Endothelial cell of umbilical vein (primary cell): ENCODE measurements at regions of chr1 and their contacts with region 1.

Region 1: DNA sequence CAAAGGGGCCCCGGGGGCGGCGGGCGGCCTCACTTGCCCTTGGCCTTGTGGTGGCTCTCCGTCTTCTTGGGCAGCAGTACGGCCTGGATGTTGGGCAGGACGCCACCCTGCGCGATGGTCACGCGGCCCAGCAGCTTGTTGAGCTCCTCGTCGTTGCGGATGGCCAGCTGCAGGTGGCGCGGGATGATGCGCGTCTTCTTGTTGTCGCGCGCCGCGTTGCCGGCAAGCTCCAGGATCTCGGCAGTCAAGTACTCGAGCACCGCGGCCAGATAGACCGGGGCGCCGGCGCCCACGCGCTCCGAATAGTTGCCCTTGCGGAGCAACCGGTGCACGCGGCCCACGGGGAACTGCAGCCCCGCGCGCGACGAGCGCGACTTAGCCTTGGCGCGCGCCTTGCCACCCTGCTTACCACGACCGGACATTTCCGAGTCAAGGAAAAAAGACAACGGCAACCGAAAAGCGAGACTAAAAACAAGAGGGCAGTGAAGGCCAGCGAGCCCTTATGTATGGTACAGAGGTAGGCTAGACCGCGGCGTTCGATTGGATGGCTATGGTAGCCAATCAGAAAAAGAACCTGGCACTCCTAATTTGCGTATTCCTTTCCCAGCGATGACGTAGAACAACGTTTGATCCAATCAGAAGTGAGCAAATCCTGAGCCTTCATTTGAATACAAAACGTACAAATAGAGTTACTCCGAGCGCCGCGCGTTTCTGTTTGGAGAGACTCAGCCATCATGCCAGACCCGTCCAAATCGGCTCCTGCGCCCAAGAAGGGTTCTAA is 29.6 kb upstream of the RNF187 start:
- DNase-seq: peak; percentile 99
- H3K4me3 ChIP-seq: peak overlapping the region; percentile 36 to 71 (median 46)
- H3K27ac ChIP-seq: peak overlapping the region; percentile 36
- H3K4me1 ChIP-seq: peaks cover 18% of the 10 kb centered on the region
- H3K27me3 ChIP-seq: peaks cover 7 to 13% of the 10 kb centered on the region in 2 experiments
- CTCF ChIP-seq: peak; percentile 3 to 42
- POLR2A ChIP-seq: peak; percentile 95

Region 2: DNA sequence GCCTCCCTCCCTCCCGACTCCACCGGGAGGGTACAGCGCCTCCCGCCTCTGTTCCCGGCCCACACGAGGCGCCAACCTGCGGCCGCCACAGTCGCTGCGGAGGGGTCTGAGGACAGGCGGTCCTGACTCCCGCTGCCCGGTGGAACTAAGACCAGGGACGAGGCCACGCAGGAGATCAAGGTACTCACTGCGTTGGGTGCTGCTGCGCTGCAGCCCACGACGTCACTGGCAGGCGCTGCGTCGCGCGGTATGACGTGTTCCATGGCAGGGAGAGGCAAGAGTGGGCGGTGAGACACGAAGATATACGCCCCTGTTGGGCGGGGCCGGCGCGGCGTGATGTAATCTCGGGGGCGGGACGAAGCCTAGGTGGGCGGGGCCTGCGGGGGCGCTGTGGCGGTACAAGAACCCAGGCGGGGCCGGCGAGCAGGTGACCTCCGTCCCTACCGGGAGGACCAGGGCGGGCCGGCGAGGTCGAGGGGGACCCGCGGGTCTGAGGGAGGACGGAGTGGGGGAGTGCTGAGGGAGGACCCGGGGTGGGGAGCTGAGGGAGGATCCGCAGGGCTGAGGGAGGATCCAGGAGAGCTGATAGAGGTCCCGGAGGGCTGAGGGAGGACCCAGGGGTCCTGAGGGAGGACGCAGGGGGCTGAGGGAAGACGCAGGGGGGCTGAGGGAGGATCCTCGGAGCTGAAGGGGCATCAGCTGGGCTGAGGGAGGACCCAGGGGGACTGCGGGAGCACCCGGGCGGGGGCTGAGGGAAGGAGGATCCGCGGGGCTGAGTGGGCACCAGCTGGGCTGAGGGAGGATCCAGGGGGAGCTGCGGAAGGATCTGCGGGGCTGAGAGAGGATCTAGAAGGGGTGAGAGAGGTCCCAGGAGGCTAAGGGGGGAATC is 348.3 kb before region 1 on chr1 and contains the start of gene MRPL55:
- CTCF ChIA-PET with region 1: no interaction called
- POLR2A ChIA-PET with region 1: interaction called, 3 read pairs
- dilution Hi-C with region 1: no loop called
- intact Hi-C with region 1: loop called (anchors 5 kb)
- DNase-seq: peak; percentile 98
- H3K4me3 ChIP-seq: peak within 1 kb of the TSS; percentile 29 to 92 (median 63)
- H3K27ac ChIP-seq: peak within 1 kb of the TSS; percentile 32
- H3K4me1 ChIP-seq: peaks cover 13% of the 10 kb centered on the region
- H3K27me3 ChIP-seq: no peaks in the 10 kb centered on the region
- CTCF ChIP-seq: no peak
- POLR2A ChIP-seq: peak; percentile 82
- total RNA-seq, gene MRPL55: 57.0 and 58.7 TPM in 2 replicates

Region 3: DNA sequence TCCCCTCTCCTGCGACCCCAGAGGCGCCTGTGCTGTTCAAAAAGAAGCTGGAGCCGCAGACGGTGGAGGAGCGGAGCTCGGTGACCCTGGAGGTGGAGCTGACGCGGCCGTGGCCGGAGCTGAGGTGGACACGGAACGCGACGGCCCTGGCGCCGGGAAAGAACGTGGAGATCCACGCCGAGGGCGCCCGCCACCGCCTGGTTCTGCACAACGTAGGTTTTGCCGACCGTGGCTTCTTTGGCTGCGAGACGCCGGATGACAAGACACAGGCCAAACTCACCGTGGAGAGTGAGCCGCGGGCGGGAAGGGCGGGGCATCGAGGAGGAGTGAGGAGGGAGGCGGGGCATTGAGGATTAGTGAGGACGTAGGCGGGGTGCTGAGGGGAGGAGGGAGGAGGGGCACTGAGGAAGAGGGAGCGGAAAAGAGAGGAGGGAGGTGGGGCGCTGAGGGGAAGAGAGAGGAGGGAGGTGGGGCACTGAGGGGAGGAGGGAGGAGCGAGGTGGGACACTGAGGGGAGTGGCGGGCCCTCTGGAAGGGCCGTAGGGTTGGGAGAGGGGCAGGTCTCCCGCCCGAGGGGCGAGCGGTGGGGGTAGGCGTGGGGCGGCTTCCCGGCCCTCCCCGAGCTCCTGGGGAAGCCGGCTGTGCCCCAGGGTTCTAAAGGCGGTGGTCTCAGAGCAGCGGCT is 181.7 kb before region 1 on chr1:
- CTCF ChIA-PET with region 1: no interaction called
- POLR2A ChIA-PET with region 1: no interaction called
- dilution Hi-C with region 1: no loop called
- intact Hi-C with region 1: loop called (anchors 5 kb)
- DNase-seq: peak; percentile 75
- H3K4me3 ChIP-seq: peak overlapping the region; percentile 40 to 62 (median 49)
- H3K27ac ChIP-seq: peak overlapping the region; percentile 21
- H3K4me1 ChIP-seq: peaks cover 7% of the 10 kb centered on the region
- H3K27me3 ChIP-seq: no peaks in the 10 kb centered on the region
- CTCF ChIP-seq: no peak
- POLR2A ChIP-seq: no peak

Region 4: GRCh38 chr1:228332797-228333738 is 124.5 kb before region 1 on chr1:
- CTCF ChIA-PET with region 1: no interaction called
- POLR2A ChIA-PET with region 1: no interaction called
- dilution Hi-C with region 1: no loop called
- intact Hi-C with region 1: no loop called
- DNase-seq: no peak
- H3K4me3 ChIP-seq: no peak overlapping the region
- H3K27ac ChIP-seq: no peak overlapping the region
- H3K4me1 ChIP-seq: no peaks in the 10 kb centered on the region
- H3K27me3 ChIP-seq: no peaks in the 10 kb centered on the region
- CTCF ChIP-seq: no peak
- POLR2A ChIP-seq: no peak

Region 5: GRCh38 chr1:228445843-228446650 is 11.5 kb before region 1 on chr1:
- CTCF ChIA-PET with region 1: interaction called, 4 read pairs
- POLR2A ChIA-PET with region 1: no interaction called
- dilution Hi-C with region 1: no loop called
- intact Hi-C with region 1: loop called (anchors 1 kb)
- DNase-seq: peak; percentile 16
- H3K4me3 ChIP-seq: no peak overlapping the region
- H3K27ac ChIP-seq: no peak overlapping the region
- H3K4me1 ChIP-seq: no peaks in the 10 kb centered on the region
- H3K27me3 ChIP-seq: peaks cover 28 to 29% of the 10 kb centered on the region in 2 experiments
- CTCF ChIP-seq: no peak
- POLR2A ChIP-seq: no peak

Region 6: GRCh38 chr1:228486596-228487335 is 29.2 kb after region 1 on chr1:
- CTCF ChIA-PET with region 1: interaction called, 36 read pairs
- POLR2A ChIA-PET with region 1: interaction called, 3 read pairs
- dilution Hi-C with region 1: no loop called
- intact Hi-C with region 1: loop called (anchors 1 kb)
- DNase-seq: peak; percentile 94
- H3K4me3 ChIP-seq: peak overlapping the region; percentile 4 to 79 (median 46)
- H3K27ac ChIP-seq: peak overlapping the region; percentile 72
- H3K4me1 ChIP-seq: no peaks in the 10 kb centered on the region
- H3K27me3 ChIP-seq: no peaks in the 10 kb centered on the region
- CTCF ChIP-seq: no peak
- POLR2A ChIP-seq: peak; percentile 65